ENCODE measurements at regions of chr3 and their contacts with region 1.

Region 1: GRCh38 chr3:194682694-194683310 is 2.9 kb upstream of the FAM43A start:
- DNase-seq: peak; percentile 80
- H3K4me3 ChIP-seq: no peak overlapping the region
- H3K27ac ChIP-seq: no peak overlapping the region
- H3K4me1 ChIP-seq: peaks cover 8% of the 10 kb centered on the region
- H3K27me3 ChIP-seq: no peaks in the 10 kb centered on the region
- CTCF ChIP-seq: peak; percentile 80

Region 2: GRCh38 chr3:194623449-194624290 is 59.1 kb before region 1 on chr3:
- intact Hi-C with region 1: no loop called
- DNase-seq: no peak
- H3K4me3 ChIP-seq: no peak overlapping the region
- H3K27ac ChIP-seq: no peak overlapping the region
- H3K4me1 ChIP-seq: no peaks in the 10 kb centered on the region
- H3K27me3 ChIP-seq: no peaks in the 10 kb centered on the region
- CTCF ChIP-seq: no peak

Region 3: GRCh38 chr3:194985031-194985578 is 302.3 kb after region 1 on chr3:
- intact Hi-C with region 1: loop called (anchors 5 kb)
- DNase-seq: peak; percentile 77
- H3K4me3 ChIP-seq: peak overlapping the region; percentile 30
- H3K27ac ChIP-seq: peak overlapping the region; percentile 13
- H3K4me1 ChIP-seq: peaks cover 5% of the 10 kb centered on the region
- H3K27me3 ChIP-seq: peaks cover 3% of the 10 kb centered on the region
- CTCF ChIP-seq: peak; percentile 32

Region 4: DNA sequence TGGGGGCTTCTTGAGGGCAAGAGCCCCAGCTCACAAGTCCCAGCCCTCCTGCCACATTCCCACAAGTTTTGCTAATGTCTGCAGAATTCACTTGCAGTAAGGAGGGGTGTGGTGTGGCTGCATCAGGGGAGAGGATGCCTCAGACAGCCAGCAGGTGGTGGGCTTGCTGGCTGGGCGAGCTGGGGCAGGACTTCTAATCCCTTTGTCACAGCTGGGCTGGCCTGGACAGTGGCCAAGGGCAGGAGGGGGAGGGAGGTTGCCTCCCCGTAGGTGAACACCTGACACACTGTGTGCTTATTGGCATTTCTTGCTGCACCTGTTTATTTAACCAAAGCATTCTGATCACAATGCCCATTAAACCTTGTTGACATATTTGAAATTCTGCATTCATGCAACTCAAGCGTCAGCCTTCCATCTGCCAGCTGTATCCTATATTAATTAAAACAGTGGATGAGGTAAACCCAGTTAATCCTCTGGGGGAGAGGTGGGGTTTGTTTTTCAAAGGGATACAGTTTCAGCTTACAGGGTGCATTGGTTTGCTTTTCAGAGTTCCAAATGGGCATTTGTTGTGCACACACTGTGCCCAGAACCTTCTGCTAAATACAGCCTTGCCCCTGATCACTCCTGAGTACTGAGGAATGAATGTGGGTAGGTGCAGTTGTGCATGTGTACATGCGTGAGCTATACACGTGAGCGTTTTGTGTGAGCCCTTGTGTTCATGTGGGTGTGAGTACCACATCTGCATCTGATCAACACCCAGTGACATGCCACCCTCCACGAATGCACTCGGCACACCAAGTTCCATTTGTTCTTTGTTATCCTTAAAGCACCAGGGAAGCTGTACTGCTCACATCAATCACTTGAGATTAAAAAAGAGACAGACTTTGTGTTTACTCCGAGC is 319.4 kb after region 1 on chr3:
- intact Hi-C with region 1: no loop called
- DNase-seq: peak; percentile 66
- H3K4me3 ChIP-seq: no peak overlapping the region
- H3K27ac ChIP-seq: no peak overlapping the region
- H3K4me1 ChIP-seq: no peaks in the 10 kb centered on the region
- H3K27me3 ChIP-seq: no peaks in the 10 kb centered on the region
- CTCF ChIP-seq: peak; percentile 45

Region 5: DNA sequence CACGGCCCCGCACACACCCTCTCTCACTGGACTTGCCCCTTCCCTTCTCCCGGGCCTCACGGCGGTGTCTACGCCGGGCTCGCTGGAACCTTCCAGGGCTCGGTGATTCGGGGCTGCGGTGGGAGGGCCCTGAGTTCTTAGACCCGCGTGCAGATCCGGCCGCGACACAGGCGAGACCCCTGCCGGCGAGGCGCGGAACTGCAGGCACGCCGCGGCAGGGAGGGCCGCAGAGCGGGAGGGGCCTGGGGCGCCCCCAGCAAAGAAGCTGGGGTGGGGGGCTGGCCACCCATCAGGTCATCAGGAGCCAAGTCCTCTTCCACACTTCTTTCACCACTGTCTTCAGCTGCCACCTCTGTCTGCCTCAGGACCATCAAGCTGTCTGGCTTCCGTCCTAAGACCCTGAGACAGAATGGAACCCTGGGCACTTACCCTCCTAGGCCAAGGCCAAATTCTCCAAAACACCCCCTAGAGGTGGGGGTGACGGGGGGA is 423.7 kb after region 1 on chr3:
- intact Hi-C with region 1: loop called (anchors 5 kb)
- DNase-seq: peak; percentile 64
- H3K4me3 ChIP-seq: no peak overlapping the region
- H3K27ac ChIP-seq: no peak overlapping the region
- H3K4me1 ChIP-seq: peaks cover 5% of the 10 kb centered on the region
- H3K27me3 ChIP-seq: no peaks in the 10 kb centered on the region
- CTCF ChIP-seq: peak; percentile 100

Measured in colonic mucosa (tissue), 4 donors.